Activated CD4-positive, alpha-beta T cell treated with anti-CD3 and anti-CD28 coated beads for 36 hours (primary cell): ENCODE measurements at regions of chr11 and their contacts with region 1.

Region 1: GRCh38 chr11:65569973-65570918 is at the start of gene ZNRD2:
- DNase-seq: peak; percentile 100
- ATAC-seq: peak; percentile 75
- H3K4me3 Mint-ChIP-seq: peak within 1 kb of the TSS; percentile 97
- H3K27ac Mint-ChIP-seq: peak within 1 kb of the TSS; percentile 96
- H3K4me1 Mint-ChIP-seq: peaks cover 60% of the 10 kb centered on the region
- H3K27me3 Mint-ChIP-seq: no peaks in the 10 kb centered on the region
- total RNA-seq, gene ZNRD2: 50.7 to 56.4 TPM

Region 2: GRCh38 chr11:64878494-64879243 is 691.6 kb before region 1 on chr11 and contains the start of gene EHD1:
- CTCF ChIA-PET with region 1: interaction called, 4 read pairs
- POLR2A ChIA-PET with region 1: no interaction called
- intact Hi-C with region 1: loop called in 1 of 2 experiments (anchors 5 kb)
- DNase-seq: peak; percentile 100
- ATAC-seq: peak; percentile 85
- H3K4me3 Mint-ChIP-seq: peak within 1 kb of the TSS; percentile 92
- H3K27ac Mint-ChIP-seq: peak within 1 kb of the TSS; percentile 97
- H3K4me1 Mint-ChIP-seq: peaks cover 60% of the 10 kb centered on the region
- H3K27me3 Mint-ChIP-seq: no peaks in the 10 kb centered on the region
- total RNA-seq, gene EHD1: 71.0 to 73.6 TPM

Region 3: DNA sequence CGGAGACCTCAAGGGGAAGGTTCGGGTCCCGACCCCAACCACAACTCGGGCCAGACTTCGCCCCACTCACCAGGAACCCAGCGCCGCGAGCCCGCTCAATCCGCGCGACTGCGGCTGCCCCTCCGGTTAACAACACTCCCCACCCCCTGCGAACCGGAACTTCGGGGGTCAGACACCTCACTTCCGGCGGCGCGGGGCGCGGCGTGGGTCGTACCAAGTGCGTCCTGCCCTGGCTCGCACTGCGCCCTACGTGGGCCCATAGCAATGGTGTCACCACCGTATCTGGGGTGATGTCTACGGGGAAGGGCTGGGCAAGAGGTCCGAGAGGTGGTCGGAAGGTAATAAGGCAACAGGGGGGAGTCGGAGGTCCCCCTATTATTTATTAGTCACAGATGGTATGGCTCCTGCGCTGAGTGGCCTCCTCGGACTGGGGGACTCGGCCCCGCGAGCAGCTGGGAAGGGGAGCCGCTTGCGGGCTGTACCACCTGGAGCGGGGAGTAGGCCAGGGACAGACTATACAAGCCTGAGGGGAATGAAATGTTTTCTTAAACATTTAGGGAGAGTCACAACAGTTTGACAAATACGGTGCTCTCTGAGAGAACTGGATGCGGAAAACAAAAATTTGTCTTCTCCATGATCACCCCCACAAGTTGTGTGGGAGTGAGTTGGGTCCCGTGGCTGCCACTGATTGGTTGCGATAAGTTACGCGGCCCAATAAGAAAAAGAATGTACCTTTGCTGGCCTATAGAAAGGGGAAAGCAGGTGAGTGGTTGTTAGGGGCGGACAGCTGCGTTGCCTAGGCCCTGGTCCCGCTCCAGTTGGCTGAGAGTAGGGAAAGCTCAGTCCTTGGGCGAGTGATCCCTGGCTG is 435.6 kb before region 1 on chr11 and contains the start of gene SYVN1:
- CTCF ChIA-PET with region 1: interaction called, 4 read pairs
- POLR2A ChIA-PET with region 1: no interaction called
- intact Hi-C with region 1: loop called in 1 of 2 experiments (anchors 1 kb)
- DNase-seq: peak; percentile 95
- ATAC-seq: peak; percentile 91
- H3K4me3 Mint-ChIP-seq: peak within 1 kb of the TSS; percentile 97
- H3K27ac Mint-ChIP-seq: peak within 1 kb of the TSS; percentile 97
- H3K4me1 Mint-ChIP-seq: peaks cover 27% of the 10 kb centered on the region
- H3K27me3 Mint-ChIP-seq: no peaks in the 10 kb centered on the region
- total RNA-seq, gene SYVN1: 24.3 to 31.1 TPM

Region 4: GRCh38 chr11:65524741-65525545 is 45.3 kb before region 1 on chr11 and contains the start of gene SCYL1:
- CTCF ChIA-PET with region 1: interaction called, 4 read pairs
- POLR2A ChIA-PET with region 1: interaction called, 4 read pairs
- intact Hi-C with region 1: loop called in 1 of 2 experiments (anchors 1 kb)
- DNase-seq: peak; percentile 91
- ATAC-seq: peak; percentile 85
- H3K4me3 Mint-ChIP-seq: peak within 1 kb of the TSS; percentile 86
- H3K27ac Mint-ChIP-seq: peak within 1 kb of the TSS; percentile 93
- H3K4me1 Mint-ChIP-seq: peaks cover 51% of the 10 kb centered on the region
- H3K27me3 Mint-ChIP-seq: no peaks in the 10 kb centered on the region
- total RNA-seq, gene SCYL1: 66.5 to 78.8 TPM

Region 5: DNA sequence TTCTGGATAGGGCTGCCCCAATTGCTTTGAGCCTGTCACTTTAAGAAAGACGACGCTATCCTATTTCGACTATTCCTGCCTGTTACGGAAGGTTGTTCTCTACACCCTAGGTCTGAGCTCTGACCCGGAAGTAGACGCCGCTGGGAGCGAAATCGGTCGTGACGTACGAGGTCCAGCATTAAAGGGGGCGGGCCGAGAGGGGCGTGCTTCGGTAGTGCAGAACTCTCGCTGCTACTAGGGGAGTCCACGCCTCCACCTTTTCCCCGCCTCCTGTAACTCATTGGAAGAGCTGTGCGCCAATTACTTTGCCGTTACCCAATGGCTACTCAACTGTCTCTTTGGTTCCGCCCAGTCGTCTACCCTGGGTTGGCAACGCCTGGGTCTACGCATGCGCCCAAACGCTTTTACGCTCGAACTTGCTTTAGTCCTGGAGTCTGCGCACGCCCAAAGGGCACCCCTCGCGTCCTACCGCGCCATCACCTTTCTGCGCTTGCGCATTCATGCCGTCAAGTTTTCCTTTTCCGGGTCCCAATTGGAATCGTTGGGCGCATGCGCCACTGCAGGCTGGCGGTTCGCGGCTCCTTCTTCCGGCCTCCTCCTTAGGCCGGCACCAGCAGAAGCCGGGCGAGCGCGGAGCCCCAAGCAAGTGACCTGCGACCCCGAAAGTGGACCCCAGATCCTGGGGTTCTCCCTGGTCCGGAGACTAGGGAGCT is 45.1 kb after region 1 on chr11 and contains the start of gene PCNX3:
- CTCF ChIA-PET with region 1: interaction called, 20 read pairs
- POLR2A ChIA-PET with region 1: interaction called, 9 read pairs
- intact Hi-C with region 1: loop called (anchors 1 kb)
- DNase-seq: peak; percentile 100
- ATAC-seq: peak; percentile 93
- H3K4me3 Mint-ChIP-seq: peak within 1 kb of the TSS; percentile 96
- H3K27ac Mint-ChIP-seq: peak within 1 kb of the TSS; percentile 94
- H3K4me1 Mint-ChIP-seq: peaks cover 38% of the 10 kb centered on the region
- H3K27me3 Mint-ChIP-seq: no peaks in the 10 kb centered on the region
- total RNA-seq, gene PCNX3: 27.9 to 30.7 TPM

Region 6: DNA sequence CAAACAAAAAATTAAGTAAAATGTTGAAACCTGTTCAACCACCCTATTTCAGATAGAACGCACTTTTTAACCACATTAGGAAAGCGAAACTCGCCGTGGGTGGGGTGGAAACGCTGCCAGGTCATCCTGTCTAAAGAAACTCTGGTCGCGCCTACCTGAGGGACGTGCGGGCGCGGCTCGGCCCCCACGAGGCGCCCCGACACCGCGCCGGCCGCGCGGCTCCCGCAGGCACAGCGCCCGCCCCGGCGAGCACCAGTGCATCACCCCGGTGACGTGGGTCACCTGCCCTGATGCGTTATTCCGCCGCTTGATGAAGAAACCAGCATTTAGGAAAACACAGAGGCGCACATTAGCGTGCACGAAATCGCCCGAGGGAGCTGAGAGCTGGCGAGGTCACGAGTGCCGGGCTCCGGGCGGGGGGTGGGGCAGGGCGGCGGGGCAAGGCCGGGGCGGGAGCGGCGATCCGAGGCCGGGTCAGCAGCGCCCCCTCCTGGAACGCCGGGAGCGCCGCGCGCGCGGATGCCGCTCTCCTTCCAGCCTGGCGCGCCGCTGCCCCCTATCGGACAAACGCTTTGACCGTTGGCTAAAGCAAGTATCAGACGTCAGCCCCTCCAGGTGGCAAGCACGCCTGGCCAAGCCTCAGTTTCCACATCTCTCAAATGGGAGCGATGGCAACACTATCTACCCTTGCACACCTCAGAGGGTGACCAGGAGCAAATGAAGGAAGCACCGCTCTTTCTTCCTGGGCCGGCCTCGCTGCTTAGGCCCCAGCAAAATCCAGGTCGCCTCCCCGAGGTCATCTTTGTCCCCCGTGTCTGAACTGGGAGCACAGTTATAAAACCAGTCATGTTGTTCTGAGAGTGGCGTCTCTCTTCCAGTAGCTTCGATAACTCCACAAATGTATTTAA is 247.8 kb after region 1 on chr11:
- CTCF ChIA-PET with region 1: no interaction called
- POLR2A ChIA-PET with region 1: no interaction called
- intact Hi-C with region 1: loop called in 1 of 2 experiments (anchors 1 kb)
- DNase-seq: peak; percentile 98
- ATAC-seq: peak; percentile 91
- H3K4me3 Mint-ChIP-seq: peak overlapping the region; percentile 74
- H3K27ac Mint-ChIP-seq: peak overlapping the region; percentile 87
- H3K4me1 Mint-ChIP-seq: peaks cover 14% of the 10 kb centered on the region
- H3K27me3 Mint-ChIP-seq: no peaks in the 10 kb centered on the region

Region 7: DNA sequence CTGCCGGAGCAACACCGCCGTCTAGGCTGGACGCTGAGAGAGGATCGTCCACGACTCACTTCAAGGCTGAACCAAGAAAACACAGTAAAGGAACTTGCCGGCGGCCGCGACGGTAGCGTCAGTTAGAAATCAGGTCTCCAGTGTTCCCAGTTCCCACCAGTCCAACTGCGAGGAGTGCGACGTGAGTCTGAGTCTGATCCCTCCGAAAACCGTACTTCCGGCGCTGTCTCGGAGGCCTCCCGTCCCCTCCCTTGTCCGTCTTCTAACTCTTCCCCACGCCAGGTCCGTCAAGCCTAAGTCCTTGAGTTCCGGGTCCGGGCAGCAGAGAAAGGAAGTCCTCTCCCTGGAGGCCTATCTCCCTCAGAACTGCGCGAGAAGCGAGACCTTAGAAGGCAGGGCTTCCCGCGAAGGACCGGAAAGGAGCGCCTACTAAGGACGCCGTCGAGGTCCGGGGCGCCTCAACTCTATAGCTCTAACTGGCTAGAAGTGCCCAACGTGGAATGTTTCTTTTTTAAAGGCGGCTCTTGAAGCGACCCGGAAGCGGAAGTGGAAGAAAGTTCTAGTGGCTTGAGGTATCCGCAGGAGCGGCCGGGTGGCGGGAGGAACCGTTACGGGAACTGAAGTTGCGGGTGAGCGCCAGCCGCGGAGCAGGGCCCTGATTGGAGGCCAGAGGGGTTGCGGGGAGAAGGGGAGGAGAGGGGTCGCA is 431.8 kb after region 1 on chr11 and contains the starts of genes BANF1 and EIF1AD:
- CTCF ChIA-PET with region 1: no interaction called
- POLR2A ChIA-PET with region 1: no interaction called
- intact Hi-C with region 1: loop called in 1 of 2 experiments (anchors 1 kb)
- DNase-seq: peak; percentile 95
- ATAC-seq: peak; percentile 88
- H3K4me3 Mint-ChIP-seq: peak within 1 kb of the TSS; percentile 100
- H3K27ac Mint-ChIP-seq: peak within 1 kb of the TSS; percentile 98
- H3K4me1 Mint-ChIP-seq: peaks cover 36% of the 10 kb centered on the region
- H3K27me3 Mint-ChIP-seq: no peaks in the 10 kb centered on the region
- total RNA-seq, gene BANF1: 233 to 293 TPM
- total RNA-seq, gene EIF1AD: 45.1 to 52.2 TPM